Activated T-helper 1 cell treated with anti-CD3 and anti-CD28 coated beads, Interleukin-12 subunit alpha, Interleukin-12 subunit beta, Interleukin-2, Interleukin-4 antibody, amounts not matched to agents 30 ng/mL and 10 ng/mL and 1 ng/mL, durations not matched to agents 14 hours and 24 hours and 36 hours (primary cell): ENCODE measurements at regions of chr2 and their contacts with region 1.

Region 1: DNA sequence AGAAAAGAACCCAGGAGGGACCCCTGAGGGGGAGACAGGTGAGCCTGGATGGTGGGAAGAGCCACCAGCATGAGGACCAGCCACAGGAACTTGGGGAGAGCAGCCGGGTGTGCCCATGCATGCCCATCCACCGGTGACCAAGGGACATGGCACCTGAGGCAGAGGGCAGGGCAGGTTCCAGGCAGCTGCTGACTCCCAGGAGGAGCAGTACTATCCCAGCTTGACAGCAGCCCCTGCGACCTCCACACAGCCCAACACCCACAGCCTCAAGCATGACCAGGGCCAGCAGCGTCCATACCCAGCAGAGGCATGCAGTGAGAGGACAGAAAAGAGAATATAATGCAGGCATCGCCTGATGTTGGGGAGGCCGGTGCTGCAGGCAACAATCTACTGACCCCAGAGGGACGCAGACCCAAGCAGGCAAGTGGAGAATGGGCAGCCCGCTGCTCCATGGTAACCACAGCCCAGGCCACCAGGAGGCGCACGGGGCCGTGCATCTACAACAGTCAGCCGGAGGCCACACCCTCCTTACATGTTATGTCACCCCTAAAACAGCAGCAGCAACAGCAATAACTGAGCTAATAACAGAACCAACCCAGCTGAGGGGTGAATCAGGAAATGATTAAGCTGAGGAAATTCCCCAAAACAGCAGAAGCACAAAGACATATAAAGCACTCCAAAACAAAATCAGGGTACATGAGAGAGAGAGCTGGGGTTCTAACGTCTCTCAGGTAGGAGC is 44.1 kb downstream of the ANKMY1 start:
- DNase-seq: peak; percentile 74
- H3K4me3 Mint-ChIP-seq: no peak overlapping the region
- H3K27ac Mint-ChIP-seq: peak overlapping the region; percentile 9
- H3K4me1 Mint-ChIP-seq: peaks cover 9% of the 10 kb centered on the region
- H3K27me3 Mint-ChIP-seq: no peaks in the 10 kb centered on the region

Region 2: DNA sequence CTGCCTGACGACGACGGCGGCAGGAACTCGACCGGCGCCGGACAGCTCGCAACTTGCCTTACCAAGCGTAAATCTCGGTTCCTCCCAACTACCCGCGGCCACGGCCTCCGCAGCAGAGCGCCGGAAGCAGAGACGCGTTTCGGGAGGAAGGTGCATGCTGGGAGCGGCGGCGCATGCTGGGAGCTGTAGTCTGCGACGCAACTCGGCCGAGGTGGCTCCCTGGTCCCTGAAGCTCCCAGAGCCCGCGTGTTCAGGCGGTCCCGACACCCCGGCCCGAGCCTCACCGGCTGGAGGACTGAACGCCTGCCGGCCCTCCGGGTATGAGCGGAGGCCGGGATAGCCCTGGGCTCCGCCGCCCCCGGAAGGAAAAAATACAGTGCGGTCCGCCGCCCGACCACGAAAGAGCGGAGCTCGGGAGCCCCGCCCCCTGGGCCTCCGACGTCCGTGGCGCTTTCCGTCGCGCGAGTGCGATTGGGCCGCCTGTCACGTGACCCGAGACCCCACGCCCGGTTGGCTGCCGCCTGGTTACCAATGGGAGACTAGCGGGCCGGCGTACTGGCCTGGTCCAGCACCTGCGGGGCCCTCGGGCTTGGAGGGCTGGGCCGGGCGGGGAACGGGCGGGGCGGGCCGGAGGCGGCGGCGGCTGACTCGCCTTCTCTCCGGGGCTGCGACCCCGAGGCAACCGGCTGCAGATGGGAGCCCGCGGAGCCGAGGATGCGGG is 72.6 kb after region 1 on chr2 and contains the start of gene CAPN10:
- intact Hi-C with region 1: loop called (anchors 1 kb)
- DNase-seq: peak; percentile 97
- H3K4me3 Mint-ChIP-seq: peak within 1 kb of the TSS; percentile 96
- H3K27ac Mint-ChIP-seq: peak within 1 kb of the TSS; percentile 93
- H3K4me1 Mint-ChIP-seq: peaks cover 38% of the 10 kb centered on the region
- H3K27me3 Mint-ChIP-seq: no peaks in the 10 kb centered on the region
- total RNA-seq, gene CAPN10: 49.8 and 55.4 TPM in 2 replicates

Region 3: DNA sequence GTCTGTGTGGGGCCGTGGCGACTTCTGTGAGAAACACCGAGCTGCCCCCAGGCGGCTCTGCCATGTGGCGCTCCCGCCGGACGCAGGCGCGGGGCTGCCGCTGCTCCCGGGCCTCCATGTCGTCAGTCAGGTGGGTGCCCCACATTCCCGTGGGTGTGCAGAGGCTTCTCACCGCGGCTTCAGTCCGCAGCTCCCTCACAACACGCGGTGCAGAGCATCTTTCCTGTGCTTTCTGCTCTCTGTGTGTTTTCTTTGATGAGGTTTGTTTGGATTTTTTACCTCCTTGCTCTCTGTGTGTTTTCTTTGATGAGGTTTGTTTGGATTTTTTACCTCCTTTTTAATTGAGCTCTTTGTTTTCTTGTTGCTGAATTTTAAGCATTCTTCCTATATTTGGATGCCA is 190.9 kb after region 1 on chr2:
- intact Hi-C with region 1: loop called (anchors 10 kb)
- DNase-seq: no peak
- H3K4me3 Mint-ChIP-seq: peak overlapping the region; percentile 42
- H3K27ac Mint-ChIP-seq: peak overlapping the region; percentile 32
- H3K4me1 Mint-ChIP-seq: peaks cover 13% of the 10 kb centered on the region
- H3K27me3 Mint-ChIP-seq: peaks cover 33% of the 10 kb centered on the region

Region 4: DNA sequence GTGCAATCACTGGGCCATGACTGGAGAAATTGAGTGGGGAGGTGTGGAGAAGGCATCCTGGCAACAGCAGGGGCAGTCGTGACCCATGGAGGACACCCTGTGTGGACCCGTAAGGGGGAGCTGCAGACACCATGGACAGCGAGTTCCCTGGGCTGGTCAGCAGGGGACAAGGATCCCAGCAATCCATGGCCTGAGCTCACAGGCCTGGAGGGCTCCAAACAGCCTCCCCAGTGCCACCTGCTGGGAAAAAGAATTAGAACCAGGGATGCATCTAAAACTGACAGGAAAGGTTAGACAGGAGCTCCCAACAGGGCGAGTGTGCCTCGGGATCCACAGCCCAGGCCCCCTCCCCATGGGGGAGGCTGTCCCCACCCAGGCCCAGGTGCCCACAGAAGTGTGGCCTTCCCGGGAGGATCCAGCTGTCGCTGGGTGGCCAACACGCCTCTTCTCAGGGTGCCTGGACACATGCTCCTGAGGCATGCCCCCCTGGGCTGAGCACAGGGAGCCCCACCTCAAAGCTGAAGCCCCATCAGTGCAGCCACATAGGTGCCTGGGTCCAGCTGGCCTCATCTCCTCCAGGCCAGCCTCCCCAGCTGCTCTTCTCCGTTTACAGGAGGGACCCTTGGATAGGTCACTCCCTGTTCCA is 326.8 kb after region 1 on chr2:
- intact Hi-C with region 1: loop called (anchors 1 kb)
- DNase-seq: no peak
- H3K4me3 Mint-ChIP-seq: no peak overlapping the region
- H3K27ac Mint-ChIP-seq: no peak overlapping the region
- H3K4me1 Mint-ChIP-seq: no peaks in the 10 kb centered on the region
- H3K27me3 Mint-ChIP-seq: peaks cover 8% of the 10 kb centered on the region